ENCODE measurements at regions of chr3 and their contacts with region 1.

Region 1: DNA sequence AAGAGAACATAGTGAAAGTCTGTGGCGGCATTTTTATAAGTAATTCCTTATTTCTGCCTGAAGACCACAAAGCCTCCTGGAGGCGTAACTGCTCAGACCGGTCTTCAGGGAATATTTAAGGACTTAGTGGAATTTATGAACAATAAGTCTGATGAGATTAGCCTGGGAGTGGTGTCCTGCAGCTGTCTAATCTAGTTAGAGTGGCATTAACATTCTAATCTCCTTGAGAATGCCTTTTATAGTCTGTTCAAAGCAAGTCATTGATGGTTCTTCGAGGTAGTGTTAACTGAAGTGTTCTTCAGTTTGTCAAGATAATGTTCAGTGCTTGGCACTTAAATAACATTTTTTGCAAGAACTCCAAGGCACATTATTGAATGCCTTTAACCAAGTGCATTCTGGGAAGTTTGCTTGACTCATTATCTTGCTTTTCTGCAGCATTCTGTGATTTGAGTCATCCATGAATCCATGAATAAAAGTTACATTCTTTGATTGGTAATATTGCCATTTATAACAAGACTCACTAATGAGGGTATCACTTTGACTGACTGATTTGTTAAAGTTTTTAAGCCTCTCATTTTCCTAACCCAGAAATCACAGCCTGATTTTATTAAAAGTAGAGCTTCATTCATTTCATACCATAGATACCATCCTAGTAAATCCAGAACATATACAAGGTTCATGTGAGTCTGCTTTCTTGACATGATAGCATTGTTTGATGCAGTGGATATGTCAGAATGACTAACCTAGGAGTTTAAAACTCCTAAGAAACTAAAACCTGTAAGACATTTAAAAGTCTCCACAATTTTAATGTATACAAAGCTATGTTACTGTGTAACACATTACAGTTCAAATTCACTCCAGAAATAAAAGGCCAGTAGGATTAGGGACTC is 12.5 kb downstream of the RBM5 start:
- DNase-seq: no peak
- H3K4me3 ChIP-seq: no peak overlapping the region
- H3K27me3 ChIP-seq: no peaks in the 10 kb centered on the region
- CTCF ChIP-seq: no peak

Region 2: GRCh38 chr3:50121416-50122032 is 20.3 kb after region 1 on chr3:
- CTCF ChIA-PET with region 1: interaction called, 12 read pairs
- POLR2A ChIA-PET with region 1: no interaction called
- DNase-seq: peak; percentile 20
- H3K4me3 ChIP-seq: no peak overlapping the region
- H3K27me3 ChIP-seq: no peaks in the 10 kb centered on the region
- CTCF ChIP-seq: peak; percentile 78

Measured in BJ (cell line).